Transverse colon (tissue), 4 donors: ENCODE measurements at regions of chrX and their contacts with region 1.

Region 1: DNA sequence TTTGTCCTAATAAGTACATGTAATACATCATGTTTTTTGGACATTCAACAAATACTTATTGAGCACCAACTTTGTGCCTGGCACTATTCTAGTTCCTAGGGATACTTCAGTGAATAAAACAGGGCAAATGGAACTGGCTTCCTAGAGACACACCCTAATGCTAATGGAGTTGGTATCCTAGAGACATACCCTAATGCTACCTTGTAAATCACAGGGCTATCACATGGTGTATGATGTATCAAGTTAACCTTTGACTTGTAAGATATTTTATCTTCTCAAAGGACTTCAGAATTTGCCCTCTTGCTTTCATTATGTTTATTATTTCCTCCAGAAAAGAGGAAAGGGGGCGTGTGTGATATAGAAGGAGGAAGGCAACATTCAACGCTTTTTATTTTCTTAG is 10.1 kb downstream of the GK start:
- DNase-seq: no peak
- H3K4me3 ChIP-seq: no peak overlapping the region
- H3K27ac ChIP-seq: no peak overlapping the region
- H3K4me1 ChIP-seq: peaks cover 0 to 5% (median 0%) of the 10 kb centered on the region in 4 donors
- H3K27me3 ChIP-seq: no peaks in the 10 kb centered on the region
- CTCF ChIP-seq: no peak
- EP300 ChIP-seq: no peak
- POLR2A ChIP-seq: no peak

Region 2: DNA sequence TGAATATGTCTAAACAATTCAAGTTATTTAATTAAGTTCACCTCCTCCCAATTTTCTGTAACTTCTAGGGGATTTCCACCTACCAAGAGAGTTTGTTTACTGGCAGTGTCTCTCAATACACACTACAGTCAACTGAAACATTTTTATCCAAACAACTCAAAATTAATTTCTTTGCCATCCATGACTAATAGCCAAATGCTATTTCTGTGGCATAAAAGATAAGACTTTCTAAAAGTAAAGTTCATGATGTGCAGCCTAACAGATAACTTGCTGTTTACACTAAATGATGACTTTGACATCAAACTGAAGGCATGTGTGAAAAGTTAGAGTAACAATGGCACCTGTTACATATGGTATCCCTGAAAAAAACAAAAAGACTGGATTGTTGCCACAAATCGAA is 218.5 kb after region 1 on chrX:
- in situ Hi-C with region 1: no loop called
- intact Hi-C with region 1: loop called (anchors 5 kb)
- DNase-seq: no peak
- H3K4me3 ChIP-seq: no peak overlapping the region
- H3K27ac ChIP-seq: no peak overlapping the region
- H3K4me1 ChIP-seq: peaks cover 0 to under 1% (median 0%) of the 10 kb centered on the region in 4 donors
- H3K27me3 ChIP-seq: no peaks in the 10 kb centered on the region
- CTCF ChIP-seq: no peak
- EP300 ChIP-seq: no peak
- POLR2A ChIP-seq: no peak